ENCODE measurements at regions of chrX and their contacts with region 1.

Region 1: DNA sequence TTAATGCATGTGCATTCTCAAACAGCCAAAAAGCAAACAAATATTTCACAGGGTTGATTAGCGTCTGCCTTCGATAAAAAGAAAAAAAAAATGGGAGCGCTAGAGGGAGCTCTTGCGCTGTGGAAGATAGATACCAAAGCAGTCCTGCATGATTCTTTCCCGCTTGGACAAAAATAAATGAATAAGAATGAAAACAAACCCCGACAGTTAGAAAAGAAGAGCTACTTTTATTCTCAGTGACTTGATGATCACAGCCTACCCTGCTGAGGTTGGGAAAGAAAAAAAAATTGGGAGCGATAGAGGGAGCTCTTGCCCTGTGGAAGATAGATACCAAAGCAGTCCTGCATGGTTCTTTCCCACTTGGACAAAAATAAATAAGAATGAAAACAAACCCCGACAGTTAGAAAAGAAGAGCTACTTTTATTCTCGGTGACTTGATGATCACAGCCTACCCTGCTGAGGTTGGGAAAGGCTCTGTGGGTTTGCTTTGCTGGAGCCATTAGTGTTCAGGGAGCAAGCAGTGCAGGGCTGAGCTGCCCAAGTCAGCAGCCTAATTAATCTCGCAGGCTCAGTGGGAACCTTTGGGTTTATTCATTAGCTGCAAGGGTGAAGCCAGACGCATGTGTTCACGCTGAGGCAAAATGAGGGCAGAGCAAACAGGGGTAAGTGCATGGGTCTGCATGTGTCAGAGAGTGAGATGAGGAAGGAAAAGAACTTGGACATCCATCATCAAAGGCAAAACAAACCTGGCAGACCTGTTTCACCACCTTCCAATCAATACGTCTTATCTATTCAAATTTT is 249.3 kb upstream of the PRKX start:
- DNase-seq: peak; percentile 83
- H3K4me3 ChIP-seq: peak overlapping the region; percentile 21
- H3K27ac ChIP-seq: no peak overlapping the region
- H3K4me1 ChIP-seq: no peaks in the 10 kb centered on the region
- H3K27me3 ChIP-seq: no peaks in the 10 kb centered on the region
- CTCF ChIP-seq: peak; percentile 80

Region 2: GRCh38 chrX:4265036-4265435 is 302.3 kb after region 1 on chrX:
- CTCF ChIA-PET with region 1: no interaction called
- POLR2A ChIA-PET with region 1: no interaction called
- intact Hi-C with region 1: loop called (anchors 2 kb)
- DNase-seq: peak; percentile 31
- H3K4me3 ChIP-seq: no peak overlapping the region
- H3K27ac ChIP-seq: no peak overlapping the region
- H3K4me1 ChIP-seq: peaks cover 8% of the 10 kb centered on the region
- H3K27me3 ChIP-seq: no peaks in the 10 kb centered on the region
- CTCF ChIP-seq: 0 out of 2 replicates have a peak, but pooled peaks have one; percentile 23

Region 3: GRCh38 chrX:4547213-4547836 is 584.6 kb after region 1 on chrX:
- CTCF ChIA-PET with region 1: interaction called, 9 read pairs
- POLR2A ChIA-PET with region 1: no interaction called
- intact Hi-C with region 1: loop called (anchors 2 kb)
- DNase-seq: peak; percentile 82
- H3K4me3 ChIP-seq: no peak overlapping the region
- H3K27ac ChIP-seq: no peak overlapping the region
- H3K4me1 ChIP-seq: peaks cover 21% of the 10 kb centered on the region
- H3K27me3 ChIP-seq: no peaks in the 10 kb centered on the region
- CTCF ChIP-seq: peak; percentile 90

Region 4: GRCh38 chrX:5113128-5113527 is 1150.4 kb after region 1 on chrX:
- CTCF ChIA-PET with region 1: interaction called, 3 read pairs
- POLR2A ChIA-PET with region 1: no interaction called
- intact Hi-C with region 1: loop called (anchors 5 kb)
- DNase-seq: peak; percentile 49
- H3K4me3 ChIP-seq: no peak overlapping the region
- H3K27ac ChIP-seq: no peak overlapping the region
- H3K4me1 ChIP-seq: peaks cover 9% of the 10 kb centered on the region
- H3K27me3 ChIP-seq: no peaks in the 10 kb centered on the region
- CTCF ChIP-seq: peak; percentile 60